ENCODE measurements at regions of chr3 and their contacts with region 1.

Region 1: DNA sequence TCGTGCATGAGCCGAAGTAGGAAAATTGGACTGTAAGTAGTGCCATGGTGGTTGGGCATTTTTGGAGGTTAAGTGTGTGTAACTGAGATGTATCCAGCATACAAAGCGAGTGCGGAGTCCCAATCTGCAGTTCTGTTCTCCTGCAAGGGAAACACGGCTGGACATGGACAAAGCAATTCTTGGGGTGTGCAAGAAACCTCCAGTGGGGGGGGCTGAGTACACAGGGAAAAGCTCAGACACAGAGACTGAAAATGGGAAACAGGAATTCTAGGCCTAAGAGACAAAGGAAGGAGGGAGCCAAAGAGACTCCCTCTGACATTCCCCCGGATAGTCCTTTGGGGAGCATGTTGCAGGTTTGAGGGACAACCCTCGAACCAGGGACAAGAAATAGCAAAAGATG is 83.2 kb upstream of the PLSCR4 start:
- DNase-seq: no peak
- ATAC-seq: no peak

Region 2: GRCh38 chr3:145959457-145960088 is 374.6 kb before region 1 on chr3:
- intact Hi-C with region 1: no loop called
- DNase-seq: no peak
- ATAC-seq: no peak

Region 3: GRCh38 chr3:146577662-146578061 is 243.5 kb after region 1 on chr3:
- intact Hi-C with region 1: loop called (anchors 5 kb)
- DNase-seq: no peak
- ATAC-seq: peak; percentile 58

Measured in Right ventricle myocardium superior (tissue), 1 donor.